ENCODE measurements at regions of chr2 and their contacts with region 1.

Region 1: GRCh38 chr2:240913810-240914644 is 7.9 kb downstream of the CROCC2 start:
- DNase-seq: peak; percentile 51
- H3K27ac ChIP-seq: peak overlapping the region; percentile 52
- CTCF ChIP-seq: peak; percentile 91

Region 2: GRCh38 chr2:240685771-240686371 is 228.2 kb before region 1 on chr2:
- CTCF ChIA-PET with region 1: no interaction called
- POLR2A ChIA-PET with region 1: no interaction called
- DNase-seq: no peak
- H3K27ac ChIP-seq: no peak overlapping the region
- CTCF ChIP-seq: no peak

Region 3: GRCh38 chr2:240873805-240874714 is 40.0 kb before region 1 on chr2:
- CTCF ChIA-PET with region 1: no interaction called
- POLR2A ChIA-PET with region 1: no interaction called
- DNase-seq: no peak
- H3K27ac ChIP-seq: no peak overlapping the region
- CTCF ChIP-seq: no peak

Region 4: DNA sequence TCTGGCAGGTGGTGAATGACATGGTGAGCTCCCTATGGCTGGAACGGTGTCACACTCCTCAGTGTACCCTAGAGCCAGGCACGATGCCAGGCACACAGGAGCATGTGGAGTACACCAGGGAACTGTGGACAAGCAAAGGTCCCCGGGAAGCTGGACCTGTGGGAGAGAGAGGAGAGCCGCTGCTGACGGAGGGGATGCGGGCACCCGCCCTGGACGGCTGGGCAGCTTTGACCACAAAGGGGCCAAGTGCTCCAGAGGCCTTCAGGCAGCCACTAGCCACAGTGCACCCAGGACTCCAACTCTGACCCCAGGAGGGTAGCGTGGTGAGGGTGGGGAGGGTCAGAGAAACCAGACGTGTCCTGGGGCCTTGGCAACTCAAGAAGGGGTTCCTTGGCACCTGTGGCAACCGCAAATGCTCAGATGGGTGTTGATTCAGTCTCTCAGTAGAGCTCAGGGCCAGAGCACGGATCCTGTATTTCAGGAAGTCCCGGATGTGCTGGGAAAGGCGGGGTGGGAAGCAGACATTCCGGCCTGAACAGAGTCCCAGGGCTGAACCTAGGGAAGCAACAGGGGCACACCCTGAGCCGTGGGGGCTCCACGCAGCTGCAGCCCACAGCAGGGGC is 15.8 kb before region 1 on chr2:
- CTCF ChIA-PET with region 1: interaction called, 14 read pairs
- POLR2A ChIA-PET with region 1: no interaction called
- DNase-seq: peak; percentile 55
- H3K27ac ChIP-seq: peak overlapping the region; percentile 11
- CTCF ChIP-seq: no peak

Region 5: GRCh38 chr2:241018051-241018891 is 104.2 kb after region 1 on chr2:
- CTCF ChIA-PET with region 1: no interaction called
- POLR2A ChIA-PET with region 1: no interaction called
- DNase-seq: no peak
- H3K27ac ChIP-seq: no peak overlapping the region
- CTCF ChIP-seq: no peak

Measured in RWPE1 (cell line).